OCI-LY7 (cell line): ENCODE measurements at regions of chr6 and their contacts with region 1.

Region 1: GRCh38 chr6:11067348-11067747 is 23.2 kb upstream of the ELOVL2 start:
- DNase-seq: no peak
- H3K4me3 ChIP-seq: no peak overlapping the region
- H3K27ac ChIP-seq: no peak overlapping the region
- H3K4me1 ChIP-seq: no peaks in the 10 kb centered on the region
- CTCF ChIP-seq: no peak

Region 2: GRCh38 chr6:10478187-10479040 is 588.9 kb before region 1 on chr6:
- CTCF ChIA-PET with region 1: no interaction called
- POLR2A ChIA-PET with region 1: interaction called, 3 read pairs
- intact Hi-C with region 1: loop called (anchors 1 kb)
- DNase-seq: peak; percentile 69
- H3K4me3 ChIP-seq: no peak overlapping the region
- H3K27ac ChIP-seq: no peak overlapping the region
- H3K4me1 ChIP-seq: no peaks in the 10 kb centered on the region
- CTCF ChIP-seq: peak; percentile 92

Region 3: GRCh38 chr6:10847684-10848083 is 219.7 kb before region 1 on chr6:
- CTCF ChIA-PET with region 1: no interaction called
- POLR2A ChIA-PET with region 1: no interaction called
- intact Hi-C with region 1: loop called (anchors 1 kb)
- DNase-seq: peak; percentile 21
- H3K4me3 ChIP-seq: no peak overlapping the region
- H3K27ac ChIP-seq: no peak overlapping the region
- H3K4me1 ChIP-seq: no peaks in the 10 kb centered on the region
- CTCF ChIP-seq: peak; percentile 77

Region 4: DNA sequence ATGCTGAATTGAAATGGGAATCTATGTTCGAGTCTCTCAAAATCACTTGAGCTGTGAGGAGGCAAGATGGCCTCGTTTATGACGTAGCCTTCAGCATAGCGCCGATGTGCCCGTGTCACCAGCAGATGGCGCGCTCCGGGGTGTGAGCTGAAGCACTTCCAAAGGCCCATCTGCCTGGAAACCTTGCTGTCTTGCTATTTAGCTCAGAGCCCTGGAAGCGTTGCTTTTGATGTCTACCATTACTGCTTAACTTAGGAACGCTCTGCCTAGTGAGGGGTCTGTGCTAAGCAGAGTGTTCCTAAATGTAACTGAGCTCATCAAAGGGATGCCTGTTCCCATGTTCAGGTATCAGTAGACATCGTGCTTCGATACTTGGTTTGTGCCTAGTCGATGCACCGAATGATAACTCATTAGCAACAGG is 112.7 kb before region 1 on chr6:
- CTCF ChIA-PET with region 1: interaction called, 5 read pairs
- POLR2A ChIA-PET with region 1: no interaction called
- intact Hi-C with region 1: loop called (anchors 1 kb)
- DNase-seq: peak; percentile 71
- H3K4me3 ChIP-seq: no peak overlapping the region
- H3K27ac ChIP-seq: no peak overlapping the region
- H3K4me1 ChIP-seq: no peaks in the 10 kb centered on the region
- CTCF ChIP-seq: peak; percentile 92

Region 5: GRCh38 chr6:11251541-11252360 is 184.4 kb after region 1 on chr6:
- CTCF ChIA-PET with region 1: no interaction called
- POLR2A ChIA-PET with region 1: interaction called, 10 read pairs
- intact Hi-C with region 1: no loop called
- DNase-seq: no peak
- H3K4me3 ChIP-seq: no peak overlapping the region
- H3K27ac ChIP-seq: no peak overlapping the region
- H3K4me1 ChIP-seq: no peaks in the 10 kb centered on the region
- CTCF ChIP-seq: no peak